GM12878 (cell line): ENCODE measurements at regions of chr6 and their contacts with region 1.

Region 1: GRCh38 chr6:157034436-157035230 is 257.5 kb downstream of the ARID1B start:
- DNase-seq: no peak
- ATAC-seq: peak; percentile 75
- H3K4me3 ChIP-seq: no peak overlapping the region
- H3K27ac ChIP-seq: no peak overlapping the region
- H3K4me1 ChIP-seq: peaks cover 6% of the 10 kb centered on the region
- H3K27me3 ChIP-seq: no peaks in the 10 kb centered on the region
- CTCF ChIP-seq: peak; percentile 52 to 60 (median 55)
- EP300 ChIP-seq: no peak
- POLR2A ChIP-seq: no peak
- RAD21 ChIP-seq: peak; percentile 70

Region 2: GRCh38 chr6:157045831-157046454 is 11.3 kb after region 1 on chr6:
- CTCF ChIA-PET with region 1: interaction called, 28 read pairs
- POLR2A ChIA-PET with region 1: no interaction called
- RAD21 ChIA-PET with region 1: interaction called, 7 read pairs
- SMC1A ChIA-PET with region 1: interaction called, 18 read pairs
- in situ Hi-C with region 1: no loop called
- intact Hi-C with region 1: no loop called
- DNase-seq: no peak
- ATAC-seq: peak; percentile 41; the same call in 2 of the 3 replicates
- H3K4me3 ChIP-seq: no peak overlapping the region
- H3K27ac ChIP-seq: no peak overlapping the region
- H3K4me1 ChIP-seq: peaks cover 10% of the 10 kb centered on the region
- H3K27me3 ChIP-seq: no peaks in the 10 kb centered on the region
- CTCF ChIP-seq: peak; percentile 36 to 49 (median 42)
- EP300 ChIP-seq: no peak
- POLR2A ChIP-seq: no peak
- RAD21 ChIP-seq: peak; percentile 51

Region 3: DNA sequence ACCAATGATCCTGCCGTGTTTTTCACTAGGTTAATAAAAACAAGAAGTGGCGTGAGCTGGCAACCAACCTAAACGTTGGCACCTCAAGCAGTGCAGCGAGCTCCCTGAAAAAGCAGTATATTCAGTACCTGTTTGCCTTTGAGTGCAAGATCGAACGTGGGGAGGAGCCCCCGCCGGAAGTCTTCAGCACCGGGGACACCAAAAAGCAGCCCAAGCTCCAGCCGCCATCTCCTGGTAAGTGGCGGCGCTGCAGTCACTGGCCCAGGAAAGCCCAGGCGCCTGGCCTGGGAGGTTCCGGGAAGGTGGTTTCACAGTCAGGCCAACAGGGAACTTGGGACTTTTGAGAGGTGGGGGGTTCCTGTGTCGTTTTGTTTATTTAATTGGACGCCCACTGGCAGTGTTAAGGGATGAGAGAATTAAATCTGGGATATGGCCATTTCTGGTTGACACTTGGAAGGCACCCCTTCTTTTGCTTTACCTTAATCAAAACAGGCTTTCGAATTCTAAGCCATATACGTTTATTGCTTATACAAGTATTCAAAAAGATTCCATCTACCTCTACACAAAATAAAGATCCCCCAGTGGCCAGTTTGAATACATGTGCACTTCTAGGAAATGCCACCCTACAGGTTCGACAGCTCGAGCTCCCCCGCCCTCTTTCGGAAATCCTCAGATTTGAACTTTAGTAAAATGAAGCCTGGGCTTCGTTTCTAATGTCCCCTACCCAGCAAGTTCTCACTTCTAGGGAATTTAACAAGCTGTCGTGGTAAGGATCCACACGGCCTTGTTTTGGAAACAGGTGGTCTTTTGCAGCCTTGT is 149.8 kb after region 1 on chr6:
- CTCF ChIA-PET with region 1: no interaction called
- POLR2A ChIA-PET with region 1: no interaction called
- RAD21 ChIA-PET with region 1: interaction called, 3 read pairs
- SMC1A ChIA-PET with region 1: interaction called, 4 read pairs
- in situ Hi-C with region 1: no loop called
- intact Hi-C with region 1: loop called (anchors 10 kb)
- DNase-seq: no peak
- ATAC-seq: peak; percentile 68
- H3K4me3 ChIP-seq: no peak overlapping the region
- H3K27ac ChIP-seq: no peak overlapping the region
- H3K4me1 ChIP-seq: no peaks in the 10 kb centered on the region
- H3K27me3 ChIP-seq: no peaks in the 10 kb centered on the region
- CTCF ChIP-seq: peak; percentile 56 to 61 (median 57); a peak in 5 of 6 replicates
- EP300 ChIP-seq: no peak
- POLR2A ChIP-seq: no peak
- RAD21 ChIP-seq: peak; percentile 60

Region 4: GRCh38 chr6:157274471-157275226 is 240.0 kb after region 1 on chr6:
- CTCF ChIA-PET with region 1: interaction called, 4 read pairs
- POLR2A ChIA-PET with region 1: no interaction called
- RAD21 ChIA-PET with region 1: interaction called, 9 read pairs
- SMC1A ChIA-PET with region 1: interaction called, 4 read pairs
- in situ Hi-C with region 1: no loop called
- intact Hi-C with region 1: loop called (anchors 10 kb)
- DNase-seq: peak; percentile 9
- ATAC-seq: peak; percentile 97
- H3K4me3 ChIP-seq: peak overlapping the region; percentile 79
- H3K27ac ChIP-seq: no peak overlapping the region
- H3K4me1 ChIP-seq: no peaks in the 10 kb centered on the region
- H3K27me3 ChIP-seq: no peaks in the 10 kb centered on the region; a peak in 1 of 4 replicates
- CTCF ChIP-seq: peak; percentile 59 to 82 (median 65); a peak in 4 of 6 replicates
- EP300 ChIP-seq: no peak
- POLR2A ChIP-seq: peak; percentile 35; the same call in 1 of the 2 replicates
- RAD21 ChIP-seq: peak; percentile 85